GM12878 (cell line): ENCODE measurements at regions of chr1 and their contacts with region 1.

Region 1: GRCh38 chr1:37458528-37458927 is 15.9 kb upstream of the ZC3H12A start:
- DNase-seq: no peak
- ATAC-seq: peak; percentile 33; the same call in 1 of the 3 replicates
- H3K4me3 ChIP-seq: no peak overlapping the region
- H3K27ac ChIP-seq: no peak overlapping the region
- H3K4me1 ChIP-seq: no peaks in the 10 kb centered on the region
- H3K27me3 ChIP-seq: no peaks in the 10 kb centered on the region
- CTCF ChIP-seq: peak in 2 of 3 experiments; percentile 14 to 39; a peak in 3 of 6 replicates
- EP300 ChIP-seq: no peak
- POLR2A ChIP-seq: no peak
- RAD21 ChIP-seq: 0 out of 2 replicates have a peak, but pooled peaks have one; percentile 25

Region 2: DNA sequence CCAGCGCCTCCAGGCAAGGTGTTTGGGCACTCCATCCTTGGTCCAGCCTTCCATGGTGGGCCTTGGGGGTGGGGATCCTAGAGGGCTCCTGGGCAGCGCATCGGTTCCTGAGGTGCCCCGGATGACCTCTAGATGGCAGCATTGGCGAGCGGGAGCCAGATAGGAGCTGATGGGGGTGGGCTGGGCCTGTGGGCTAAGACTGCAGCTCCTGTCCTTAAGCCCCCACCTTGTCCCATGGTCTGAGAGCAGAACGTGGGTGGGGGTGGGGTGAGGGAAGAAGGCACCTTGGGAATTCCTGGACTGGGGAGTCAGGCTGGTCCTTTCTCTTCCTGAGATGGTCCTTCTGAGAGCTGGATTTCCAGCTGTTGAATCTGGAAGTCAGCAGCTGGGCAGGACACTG is 882.4 kb before region 1 on chr1:
- CTCF ChIA-PET with region 1: no interaction called
- POLR2A ChIA-PET with region 1: no interaction called
- RAD21 ChIA-PET with region 1: no interaction called
- SMC1A ChIA-PET with region 1: no interaction called
- in situ Hi-C with region 1: no loop called
- intact Hi-C with region 1: no loop called
- DNase-seq: no peak
- ATAC-seq: peak; percentile 97
- H3K4me3 ChIP-seq: no peak overlapping the region
- H3K27ac ChIP-seq: no peak overlapping the region
- H3K4me1 ChIP-seq: no peaks in the 10 kb centered on the region
- H3K27me3 ChIP-seq: peaks cover 0 to 4% of the 10 kb centered on the region in 2 experiments; a peak in 3 of 4 replicates
- CTCF ChIP-seq: peak; percentile 86 to 95 (median 86)
- EP300 ChIP-seq: no peak
- POLR2A ChIP-seq: no peak
- RAD21 ChIP-seq: peak; percentile 74

Region 3: GRCh38 chr1:37479255-37480124 is 21.0 kb after region 1 on chr1:
- CTCF ChIA-PET with region 1: interaction called, 289 read pairs
- POLR2A ChIA-PET with region 1: interaction called, 4 read pairs
- RAD21 ChIA-PET with region 1: interaction called, 166 read pairs
- SMC1A ChIA-PET with region 1: interaction called, 128 read pairs
- in situ Hi-C with region 1: no loop called
- intact Hi-C with region 1: no loop called
- DNase-seq: peak; percentile 65
- ATAC-seq: peak; percentile 53
- H3K4me3 ChIP-seq: peak overlapping the region; percentile 99
- H3K27ac ChIP-seq: peak overlapping the region; percentile 99
- H3K4me1 ChIP-seq: peaks cover 22% of the 10 kb centered on the region
- H3K27me3 ChIP-seq: no peaks in the 10 kb centered on the region
- CTCF ChIP-seq: no peak
- EP300 ChIP-seq: 0 out of 4 replicates have a peak, but pooled peaks of 1 of the 2 experiments have one; percentile 7
- POLR2A ChIP-seq: peak; percentile 85
- RAD21 ChIP-seq: no peak

Region 4: DNA sequence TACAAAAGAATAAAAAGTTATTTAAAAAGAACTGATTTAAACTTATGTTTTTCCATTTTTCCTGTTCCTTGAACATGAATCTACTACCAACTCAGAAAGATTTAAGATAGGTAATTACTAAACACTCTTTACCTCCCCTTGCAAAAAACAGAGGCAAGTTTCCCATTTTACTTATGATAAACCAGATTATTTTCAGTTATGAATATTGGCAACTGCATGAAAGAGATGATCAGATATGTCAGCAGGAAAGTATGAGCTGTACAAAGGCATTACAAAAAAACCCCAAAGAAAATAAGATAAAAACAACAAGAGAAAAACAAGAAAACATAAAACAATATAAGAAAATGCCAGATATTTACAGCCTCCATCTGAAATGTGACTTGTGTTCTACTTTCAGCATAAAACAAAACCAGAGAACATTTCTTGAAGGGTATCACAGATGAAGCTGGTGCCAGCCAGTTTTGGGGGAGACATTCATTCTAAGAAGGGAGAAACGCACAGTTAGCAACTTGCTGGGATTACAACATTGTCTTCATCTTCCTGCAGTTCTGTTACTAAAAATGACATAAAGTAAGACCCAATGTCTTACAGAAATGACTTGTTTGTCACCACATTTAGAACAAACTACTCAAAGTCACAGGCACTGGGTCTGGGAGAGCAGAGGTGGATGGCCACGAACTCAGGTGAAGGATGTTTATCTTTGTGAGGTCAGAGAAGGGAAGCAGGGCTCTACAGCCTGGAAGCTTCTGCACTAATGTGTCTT is 35.0 kb after region 1 on chr1:
- CTCF ChIA-PET with region 1: interaction called, 289 read pairs
- POLR2A ChIA-PET with region 1: no interaction called
- RAD21 ChIA-PET with region 1: interaction called, 166 read pairs
- SMC1A ChIA-PET with region 1: interaction called, 5 read pairs
- in situ Hi-C with region 1: loop called (anchors 5 kb)
- intact Hi-C with region 1: no loop called
- DNase-seq: no peak
- ATAC-seq: no peak
- H3K4me3 ChIP-seq: no peak overlapping the region
- H3K27ac ChIP-seq: no peak overlapping the region
- H3K4me1 ChIP-seq: no peaks in the 10 kb centered on the region
- H3K27me3 ChIP-seq: no peaks in the 10 kb centered on the region
- CTCF ChIP-seq: no peak
- EP300 ChIP-seq: no peak
- POLR2A ChIP-seq: no peak
- RAD21 ChIP-seq: no peak

Region 5: GRCh38 chr1:37676281-37677243 is 218.0 kb after region 1 on chr1:
- CTCF ChIA-PET with region 1: interaction called, 33 read pairs
- POLR2A ChIA-PET with region 1: no interaction called
- RAD21 ChIA-PET with region 1: interaction called, 7 read pairs
- SMC1A ChIA-PET with region 1: interaction called, 14 read pairs
- in situ Hi-C with region 1: loop called (anchors 5 kb)
- intact Hi-C with region 1: no loop called
- DNase-seq: peak; percentile 68
- ATAC-seq: peak; percentile 94
- H3K4me3 ChIP-seq: peak overlapping the region; percentile 28; the same call in 1 of the 2 replicates
- H3K27ac ChIP-seq: peak overlapping the region; percentile 93
- H3K4me1 ChIP-seq: peaks cover 27% of the 10 kb centered on the region
- H3K27me3 ChIP-seq: no peaks in the 10 kb centered on the region
- CTCF ChIP-seq: peak in 1 of 3 experiments; percentile 14; a peak in 2 of 6 replicates
- EP300 ChIP-seq: peak in 1 of 2 experiments; percentile 44; a peak in 1 of 4 replicates
- POLR2A ChIP-seq: no peak
- RAD21 ChIP-seq: peak; percentile 40; the same call in 1 of the 2 replicates